ENCODE measurements at regions of chr1 and their contacts with region 1.

Region 1: GRCh38 chr1:235075188-235075926 is 53.3 kb downstream of the TOMM20 start:
- DNase-seq: peak in 5 of 7 donors; percentile 47 to 79 (median 57)
- H3K4me3 ChIP-seq: no peak overlapping the region
- H3K27ac ChIP-seq: peak overlapping the region in 4 of 5 donors; percentile 60 to 94 (median 72)
- H3K4me1 ChIP-seq: peaks cover 38 to 52% of the 10 kb centered on the region in 2 donors
- H3K27me3 ChIP-seq: no peaks in the 10 kb centered on the region
- CTCF ChIP-seq: no peak
- POLR2A ChIP-seq: no peak

Region 2: DNA sequence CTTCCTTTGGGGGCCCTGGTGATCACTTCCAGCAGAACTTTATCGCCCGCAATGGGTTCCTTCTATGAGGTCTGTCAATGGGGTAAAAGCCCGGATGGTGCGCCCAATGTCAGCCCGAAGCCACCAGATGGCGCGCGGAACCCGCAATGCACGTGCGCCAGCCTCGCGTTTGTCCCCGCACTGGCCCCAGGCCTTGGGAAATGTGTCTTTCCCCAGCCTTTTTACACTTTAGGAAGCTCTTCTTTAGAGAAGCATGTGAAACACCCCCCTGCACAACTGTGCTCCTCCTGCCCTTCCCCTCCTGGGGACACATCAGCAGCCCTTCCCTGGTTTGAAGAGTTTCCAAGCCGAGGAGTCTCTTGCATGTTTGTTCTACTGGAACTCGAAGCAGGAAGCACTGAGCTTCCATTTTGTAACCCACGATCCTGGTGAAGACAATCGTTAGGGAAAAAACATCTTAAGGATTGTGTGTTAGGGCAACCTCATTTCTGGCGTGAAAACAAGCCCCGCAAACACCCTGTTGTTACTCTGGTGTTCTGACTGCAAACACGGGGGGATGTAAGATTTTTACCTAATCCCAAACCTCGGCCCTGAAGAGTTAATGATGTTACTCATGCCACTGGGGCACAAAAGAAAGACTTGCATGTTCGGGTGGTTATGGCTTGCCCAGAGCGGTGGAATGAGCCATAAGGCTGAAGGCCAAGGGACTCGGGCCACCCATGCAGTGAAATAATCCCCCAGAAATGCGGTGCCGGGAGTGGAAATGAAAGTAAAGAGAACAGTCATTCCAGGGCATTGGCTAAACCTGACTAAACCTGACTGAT is 576.0 kb before region 1 on chr1:
- intact Hi-C with region 1: loop called in 1 of 2 experiments (anchors 5 kb)
- DNase-seq: peak; percentile 87 to 97 (median 92)
- H3K4me3 ChIP-seq: no peak overlapping the region
- H3K27ac ChIP-seq: peak overlapping the region in 4 of 5 donors; percentile 34 to 90 (median 76)
- H3K4me1 ChIP-seq: peaks cover 10 to 19% of the 10 kb centered on the region in 2 donors
- H3K27me3 ChIP-seq: no peaks in the 10 kb centered on the region
- CTCF ChIP-seq: peak; percentile 76 to 99 (median 97)
- POLR2A ChIP-seq: peak in 1 of 2 donors; percentile 8

Region 3: GRCh38 chr1:234665975-234666605 is 409.3 kb before region 1 on chr1:
- intact Hi-C with region 1: no loop called
- DNase-seq: peak in 4 of 7 donors; percentile 42 to 65 (median 47)
- H3K4me3 ChIP-seq: no peak overlapping the region
- H3K27ac ChIP-seq: peak overlapping the region in 3 of 5 donors; percentile 50 to 80 (median 76)
- H3K4me1 ChIP-seq: peaks cover 4 to 17% of the 10 kb centered on the region in 2 donors
- H3K27me3 ChIP-seq: no peaks in the 10 kb centered on the region
- CTCF ChIP-seq: no peak
- POLR2A ChIP-seq: no peak

Region 4: GRCh38 chr1:234722904-234723720 is 352.2 kb before region 1 on chr1:
- intact Hi-C with region 1: loop called in 1 of 2 experiments (anchors 5 kb)
- DNase-seq: peak; percentile 77 to 92 (median 88)
- H3K4me3 ChIP-seq: peak overlapping the region in 1 of 4 donors; percentile 4
- H3K27ac ChIP-seq: peak overlapping the region; percentile 93 to 98 (median 97)
- H3K4me1 ChIP-seq: peaks cover 73 to 92% of the 10 kb centered on the region in 2 donors
- H3K27me3 ChIP-seq: no peaks in the 10 kb centered on the region
- CTCF ChIP-seq: peak in 1 of 6 experiments; percentile 11
- POLR2A ChIP-seq: peak in 1 of 2 donors; percentile 67

Region 5: DNA sequence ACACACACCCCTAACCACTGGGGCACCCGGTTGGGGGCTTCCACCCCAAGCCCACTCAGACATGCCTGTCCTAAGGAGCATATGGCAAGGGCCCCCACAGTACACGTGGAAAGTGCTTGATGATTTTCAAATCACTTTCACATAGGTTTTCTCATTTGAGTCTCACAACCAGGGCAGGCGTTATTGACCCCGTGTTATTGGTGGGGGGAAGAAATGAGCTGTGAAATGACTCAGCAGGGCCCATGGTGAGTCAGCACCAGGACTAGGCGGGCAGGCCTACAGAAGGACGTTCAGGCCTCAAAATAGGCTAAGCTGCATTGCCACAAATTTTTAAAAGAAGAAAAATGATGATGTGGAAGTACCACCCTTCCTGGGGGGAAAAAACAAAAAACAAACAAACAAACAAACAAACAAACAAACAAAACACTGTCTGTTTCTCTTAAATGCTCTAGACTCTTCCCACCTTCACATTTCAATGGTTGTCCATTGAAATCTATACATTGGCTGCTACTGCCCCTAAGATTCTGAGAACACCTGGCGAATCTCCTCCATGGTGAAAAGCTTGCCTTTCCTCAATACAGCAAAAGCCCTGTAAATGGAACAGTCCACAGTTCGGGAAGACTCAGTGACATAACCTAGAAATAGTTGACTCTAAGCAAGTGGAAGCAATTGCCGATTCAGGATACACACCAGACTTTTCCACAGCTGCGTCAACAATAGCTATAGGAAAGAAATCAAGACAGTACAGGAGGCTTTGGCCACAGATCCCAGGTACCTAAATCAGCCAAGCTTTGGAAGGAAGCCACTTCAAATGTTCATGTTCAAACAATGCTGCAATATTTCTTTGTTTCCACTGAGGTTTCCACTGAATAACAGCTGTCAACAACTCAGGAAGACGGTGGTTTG is 181.4 kb before region 1 on chr1:
- intact Hi-C with region 1: no loop called
- DNase-seq: peak in 6 of 7 donors; percentile 65 to 87 (median 80)
- H3K4me3 ChIP-seq: no peak overlapping the region
- H3K27ac ChIP-seq: peak overlapping the region in 3 of 5 donors; percentile 52 to 70 (median 68)
- H3K4me1 ChIP-seq: peaks cover 9 to 39% of the 10 kb centered on the region in 2 donors
- H3K27me3 ChIP-seq: no peaks in the 10 kb centered on the region
- CTCF ChIP-seq: no peak
- POLR2A ChIP-seq: no peak

Region 6: DNA sequence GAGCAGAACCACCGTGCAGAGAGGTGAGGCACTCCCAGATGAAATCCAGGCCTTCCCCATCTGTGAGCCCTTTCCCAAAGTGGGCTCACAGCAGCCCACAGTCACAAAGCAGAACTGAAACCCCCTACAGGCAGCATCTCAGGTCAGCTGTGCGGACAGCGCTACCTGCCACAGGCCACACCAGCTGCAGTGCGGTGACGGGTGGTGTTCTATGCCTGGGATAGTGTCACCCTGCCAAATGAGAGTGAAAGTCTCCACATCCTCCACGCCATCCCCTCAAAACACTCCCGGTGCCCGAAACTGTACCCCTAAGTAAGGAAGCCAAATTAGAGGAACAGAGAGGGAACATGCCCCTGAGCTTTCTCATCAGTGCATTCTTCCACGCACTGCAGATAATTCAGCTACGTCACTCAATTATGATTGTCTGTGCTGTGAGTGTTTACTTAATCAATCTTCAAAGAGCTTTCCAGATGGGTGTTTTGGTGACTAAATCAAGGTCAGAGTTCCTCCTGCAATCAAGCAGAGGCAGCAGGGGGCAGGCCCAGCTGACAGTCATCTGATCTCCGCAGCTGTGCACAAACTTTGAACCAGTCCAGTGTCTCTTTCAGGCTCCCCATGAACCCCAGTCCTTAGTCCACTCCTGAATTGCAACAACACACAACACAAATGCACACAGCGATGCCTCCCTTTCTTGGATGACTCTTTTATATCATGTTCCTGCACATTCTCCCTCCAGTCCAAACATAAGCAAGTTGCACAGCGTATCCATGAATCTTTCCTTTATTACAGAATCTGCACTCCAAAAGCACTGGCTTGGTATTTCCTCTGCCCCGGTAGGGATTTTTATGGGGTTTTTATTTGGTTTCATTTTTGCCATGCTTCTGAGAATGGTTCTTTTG is 96.7 kb before region 1 on chr1:
- intact Hi-C with region 1: loop called in 1 of 2 experiments (anchors 5 kb)
- DNase-seq: peak; percentile 73 to 91 (median 86)
- H3K4me3 ChIP-seq: peak overlapping the region in 1 of 4 donors; percentile 7
- H3K27ac ChIP-seq: peak overlapping the region; percentile 94 to 99 (median 95)
- H3K4me1 ChIP-seq: peaks cover 61 to 82% of the 10 kb centered on the region in 2 donors
- H3K27me3 ChIP-seq: no peaks in the 10 kb centered on the region
- CTCF ChIP-seq: peak in 1 of 6 experiments; percentile 21
- POLR2A ChIP-seq: peak in 1 of 2 donors; percentile 67

Region 7: GRCh38 chr1:235006132-235006943 is 69.0 kb before region 1 on chr1:
- intact Hi-C with region 1: loop called in 1 of 2 experiments (anchors 5 kb)
- DNase-seq: peak in 1 of 7 donors; percentile 3
- H3K4me3 ChIP-seq: no peak overlapping the region
- H3K27ac ChIP-seq: no peak overlapping the region
- H3K4me1 ChIP-seq: peaks cover 0 to under 1% of the 10 kb centered on the region in 2 donors
- H3K27me3 ChIP-seq: no peaks in the 10 kb centered on the region
- CTCF ChIP-seq: no peak
- POLR2A ChIP-seq: no peak

Measured in adrenal gland (tissue), 19 donors.